PC-9 (cell line): ENCODE measurements at regions of chr5 and their contacts with region 1.

Region 1: GRCh38 chr5:10695055-10695649 is 65.9 kb downstream of the DAP start:
- DNase-seq: peak; percentile 66 to 93
- H3K4me3 ChIP-seq: no peak overlapping the region
- H3K27ac ChIP-seq: peak overlapping the region; percentile 42
- H3K4me1 ChIP-seq: peaks cover 24% of the 10 kb centered on the region
- H3K27me3 ChIP-seq: no peaks in the 10 kb centered on the region
- CTCF ChIP-seq: peak; percentile 90

Region 2: GRCh38 chr5:10645146-10645545 is 50.0 kb before region 1 on chr5:
- CTCF ChIA-PET with region 1: interaction called, 11 read pairs
- POLR2A ChIA-PET with region 1: no interaction called
- intact Hi-C with region 1: no loop called
- DNase-seq: no peak
- H3K4me3 ChIP-seq: no peak overlapping the region
- H3K27ac ChIP-seq: no peak overlapping the region
- H3K4me1 ChIP-seq: no peaks in the 10 kb centered on the region
- H3K27me3 ChIP-seq: no peaks in the 10 kb centered on the region
- CTCF ChIP-seq: no peak

Region 3: GRCh38 chr5:10801931-10802659 is 106.9 kb after region 1 on chr5:
- CTCF ChIA-PET with region 1: no interaction called
- POLR2A ChIA-PET with region 1: no interaction called
- intact Hi-C with region 1: loop called (anchors 2 kb)
- DNase-seq: peak in 1 of 2 experiments; percentile 32
- H3K4me3 ChIP-seq: no peak overlapping the region
- H3K27ac ChIP-seq: no peak overlapping the region
- H3K4me1 ChIP-seq: no peaks in the 10 kb centered on the region
- H3K27me3 ChIP-seq: no peaks in the 10 kb centered on the region
- CTCF ChIP-seq: no peak

Region 4: GRCh38 chr5:10964806-10965205 is 269.7 kb after region 1 on chr5:
- CTCF ChIA-PET with region 1: no interaction called
- POLR2A ChIA-PET with region 1: no interaction called
- intact Hi-C with region 1: loop called (anchors 10 kb)
- DNase-seq: no peak
- H3K4me3 ChIP-seq: no peak overlapping the region
- H3K27ac ChIP-seq: no peak overlapping the region
- H3K4me1 ChIP-seq: peaks cover 5% of the 10 kb centered on the region; the same call in 1 of the 2 replicates
- H3K27me3 ChIP-seq: no peaks in the 10 kb centered on the region
- CTCF ChIP-seq: no peak

Region 5: DNA sequence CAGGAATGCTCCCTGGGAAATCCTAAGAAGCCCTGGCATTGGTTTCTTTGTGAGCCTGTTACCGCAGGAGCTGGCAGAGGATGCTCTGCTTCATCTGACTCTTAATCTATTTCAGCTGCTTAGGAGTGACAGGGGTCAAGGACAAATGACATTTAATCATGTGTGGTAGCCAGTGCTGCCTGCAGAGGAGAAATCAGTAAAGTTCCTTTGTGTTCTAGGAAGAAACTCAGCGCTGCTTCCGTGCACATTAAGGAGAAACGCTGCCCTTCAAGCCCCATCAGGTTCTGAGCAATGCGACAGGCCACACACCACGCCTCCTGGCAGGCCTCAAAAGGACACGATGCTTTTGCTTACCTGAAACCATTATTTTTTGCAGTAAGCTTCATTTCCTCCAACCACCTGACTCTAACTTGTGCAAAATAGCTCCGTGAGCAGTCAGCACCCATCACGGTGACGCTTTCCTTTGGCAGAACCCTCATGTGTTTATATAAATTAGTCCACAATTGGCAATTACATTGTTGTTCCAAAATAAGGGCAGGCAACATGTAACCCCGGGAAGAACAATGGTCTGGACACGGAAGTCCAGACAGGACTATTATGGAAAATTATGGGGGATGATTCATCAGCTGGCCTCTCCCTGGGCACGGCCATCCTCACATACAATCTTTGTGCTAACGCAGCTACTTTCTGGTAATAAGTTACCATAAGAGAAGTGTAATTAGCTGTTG is 453.8 kb after region 1 on chr5:
- CTCF ChIA-PET with region 1: interaction called, 10 read pairs
- POLR2A ChIA-PET with region 1: no interaction called
- intact Hi-C with region 1: no loop called
- DNase-seq: no peak
- H3K4me3 ChIP-seq: no peak overlapping the region
- H3K27ac ChIP-seq: no peak overlapping the region
- H3K4me1 ChIP-seq: no peaks in the 10 kb centered on the region
- H3K27me3 ChIP-seq: peaks cover 79% of the 10 kb centered on the region
- CTCF ChIP-seq: no peak

Region 6: DNA sequence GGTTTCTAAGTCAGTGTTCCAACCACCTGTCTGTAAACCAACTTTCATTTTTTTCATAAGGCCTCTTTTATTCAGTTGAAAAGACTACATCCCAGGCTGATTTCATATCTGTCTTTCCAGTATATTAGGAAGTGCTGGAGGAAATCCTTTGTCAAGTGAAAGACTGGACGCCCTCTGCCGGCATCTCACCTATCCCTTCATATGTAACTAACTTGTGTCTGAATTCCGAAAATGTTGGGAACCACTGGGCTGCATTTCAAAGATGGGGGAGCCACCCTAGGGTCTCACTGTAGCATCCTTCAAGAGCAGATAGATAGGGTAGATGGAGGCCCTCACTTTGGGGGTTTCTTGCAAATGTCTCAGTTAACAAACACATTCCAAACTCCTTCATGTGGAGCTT is 639.2 kb after region 1 on chr5:
- CTCF ChIA-PET with region 1: no interaction called
- POLR2A ChIA-PET with region 1: no interaction called
- intact Hi-C with region 1: loop called (anchors 2 kb)
- DNase-seq: peak in 1 of 2 experiments; percentile 24
- H3K4me3 ChIP-seq: no peak overlapping the region
- H3K27ac ChIP-seq: no peak overlapping the region
- H3K4me1 ChIP-seq: no peaks in the 10 kb centered on the region
- H3K27me3 ChIP-seq: peaks cover 16% of the 10 kb centered on the region
- CTCF ChIP-seq: peak; percentile 53; the same call in 1 of the 2 replicates

Region 7: GRCh38 chr5:11719888-11720481 is 1024.8 kb after region 1 on chr5:
- CTCF ChIA-PET with region 1: no interaction called
- POLR2A ChIA-PET with region 1: no interaction called
- intact Hi-C with region 1: loop called (anchors 1 kb)
- DNase-seq: peak in 1 of 2 experiments; percentile 44
- H3K4me3 ChIP-seq: no peak overlapping the region
- H3K27ac ChIP-seq: no peak overlapping the region
- H3K4me1 ChIP-seq: no peaks in the 10 kb centered on the region
- H3K27me3 ChIP-seq: no peaks in the 10 kb centered on the region
- CTCF ChIP-seq: peak; percentile 57